PC-9 (cell line): ENCODE measurements at regions of chr20 and their contacts with region 1.

Region 1: GRCh38 chr20:33401184-33401920 is at the start of gene CDK5RAP1:
- DNase-seq: peak; percentile 82
- H3K4me3 ChIP-seq: peak within 1 kb of the TSS; percentile 98
- H3K27ac ChIP-seq: no peak within 1 kb of the TSS
- H3K4me1 ChIP-seq: peaks cover 13% of the 10 kb centered on the region
- H3K27me3 ChIP-seq: no peaks in the 10 kb centered on the region
- CTCF ChIP-seq: no peak
- total RNA-seq, gene CDK5RAP1: 39.7 and 45.3 TPM in 2 replicates

Region 2: DNA sequence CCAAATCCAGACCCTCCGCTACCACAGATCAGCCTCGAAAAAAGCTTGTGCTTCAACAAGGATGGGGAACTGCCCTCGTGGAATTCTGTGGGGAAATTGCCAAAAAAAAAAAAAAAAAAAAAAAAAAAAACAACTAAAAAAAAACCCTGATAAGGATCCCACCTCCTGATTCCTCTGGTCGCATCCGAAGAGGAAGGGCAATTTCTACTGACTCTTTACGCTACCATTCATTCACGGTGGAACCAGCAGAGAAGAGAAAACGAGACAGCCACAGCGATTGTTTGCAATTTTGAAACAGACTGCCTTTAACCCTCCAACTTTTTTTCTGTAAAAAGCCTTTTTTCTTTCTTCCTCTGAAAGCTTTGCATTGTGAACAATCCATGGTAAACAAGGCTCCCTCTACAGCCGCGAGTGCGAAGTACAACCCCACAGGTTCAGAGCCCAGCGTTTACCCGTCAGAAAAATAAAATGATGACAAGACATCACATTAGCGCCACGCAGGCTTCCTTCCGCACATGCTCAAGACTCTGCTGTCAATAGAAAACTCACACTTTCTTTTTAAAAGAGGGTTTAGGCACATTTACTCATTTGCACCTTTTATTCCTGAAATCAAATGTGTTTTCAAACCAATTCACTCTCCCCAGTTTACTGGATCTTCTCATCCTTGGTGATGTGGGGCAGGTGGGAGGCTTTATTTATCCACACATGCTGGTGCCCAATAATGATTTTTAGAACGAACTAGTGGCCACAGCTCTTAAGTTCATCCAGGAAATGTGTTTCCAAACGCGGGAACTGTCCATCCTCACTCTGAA is 916.2 kb before region 1 on chr20:
- CTCF ChIA-PET with region 1: no interaction called
- POLR2A ChIA-PET with region 1: interaction called, 28 read pairs
- intact Hi-C with region 1: no loop called
- DNase-seq: peak; percentile 59 to 72
- H3K4me3 ChIP-seq: peak overlapping the region; percentile 82
- H3K27ac ChIP-seq: peak overlapping the region; percentile 41; the same call in 1 of the 2 replicates
- H3K4me1 ChIP-seq: peaks cover 13% of the 10 kb centered on the region
- H3K27me3 ChIP-seq: no peaks in the 10 kb centered on the region
- CTCF ChIP-seq: peak; percentile 83

Region 3: GRCh38 chr20:33443512-33444239 is 42.3 kb after region 1 on chr20 and contains the start of gene SNTA1:
- CTCF ChIA-PET with region 1: interaction called, 5 read pairs
- POLR2A ChIA-PET with region 1: interaction called, 9 read pairs
- intact Hi-C with region 1: loop called (anchors 1 kb)
- DNase-seq: peak; percentile 71 to 94
- H3K4me3 ChIP-seq: peak within 1 kb of the TSS; percentile 71
- H3K27ac ChIP-seq: no peak within 1 kb of the TSS
- H3K4me1 ChIP-seq: peaks cover 4% of the 10 kb centered on the region; the same call in 1 of the 2 replicates
- H3K27me3 ChIP-seq: no peaks in the 10 kb centered on the region
- CTCF ChIP-seq: no peak
- total RNA-seq, gene SNTA1: 7.6 and 10.1 TPM in 2 replicates

Region 4: GRCh38 chr20:33551778-33552177 is 150.4 kb after region 1 on chr20:
- CTCF ChIA-PET with region 1: no interaction called
- POLR2A ChIA-PET with region 1: no interaction called
- intact Hi-C with region 1: no loop called
- DNase-seq: no peak
- H3K4me3 ChIP-seq: no peak overlapping the region
- H3K27ac ChIP-seq: no peak overlapping the region
- H3K4me1 ChIP-seq: peaks cover 13% of the 10 kb centered on the region
- H3K27me3 ChIP-seq: no peaks in the 10 kb centered on the region
- CTCF ChIP-seq: no peak

Region 5: DNA sequence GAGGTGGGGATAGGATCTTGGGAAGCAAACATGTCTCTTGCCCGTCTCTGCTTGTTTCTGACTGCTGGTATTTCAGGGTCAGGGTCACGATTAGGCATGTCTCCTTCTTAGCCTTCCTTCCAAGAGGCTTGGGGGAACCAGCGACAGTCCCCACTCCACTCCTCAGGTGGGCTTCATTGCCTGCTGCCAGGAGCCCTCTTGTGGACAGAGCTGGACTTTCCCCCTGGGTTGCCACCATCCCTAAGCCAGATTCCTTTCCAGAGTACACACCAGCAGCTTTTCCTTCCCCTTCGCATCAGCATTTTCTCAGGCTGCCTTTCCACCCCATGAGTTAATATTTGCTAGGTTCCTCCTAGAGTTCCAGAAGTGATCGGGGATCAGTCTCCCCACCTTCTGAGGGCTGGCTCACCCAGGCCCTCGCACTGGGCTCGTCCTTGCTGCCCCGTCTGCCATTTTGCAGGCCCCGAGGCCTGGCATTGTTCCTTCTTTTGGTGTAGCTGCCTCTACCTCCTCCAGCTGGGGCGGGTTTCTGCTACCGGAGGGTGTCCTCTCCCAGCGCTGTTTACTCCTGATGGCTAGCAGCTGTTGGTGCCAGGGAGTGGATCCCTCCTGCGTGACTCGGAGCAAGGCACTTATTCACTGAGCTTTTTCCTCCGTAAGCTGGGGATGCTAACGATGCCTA is 252.0 kb after region 1 on chr20:
- CTCF ChIA-PET with region 1: no interaction called
- POLR2A ChIA-PET with region 1: no interaction called
- intact Hi-C with region 1: loop called (anchors 5 kb)
- DNase-seq: peak in 1 of 2 experiments; percentile 60
- H3K4me3 ChIP-seq: no peak overlapping the region
- H3K27ac ChIP-seq: no peak overlapping the region
- H3K4me1 ChIP-seq: peaks cover 48% of the 10 kb centered on the region
- H3K27me3 ChIP-seq: no peaks in the 10 kb centered on the region
- CTCF ChIP-seq: peak; percentile 77

Region 6: GRCh38 chr20:34047917-34048316 is 646.6 kb after region 1 on chr20:
- CTCF ChIA-PET with region 1: interaction called, 21 read pairs
- POLR2A ChIA-PET with region 1: no interaction called
- intact Hi-C with region 1: no loop called
- DNase-seq: no peak
- H3K4me3 ChIP-seq: no peak overlapping the region
- H3K27ac ChIP-seq: no peak overlapping the region
- H3K4me1 ChIP-seq: no peaks in the 10 kb centered on the region
- H3K27me3 ChIP-seq: no peaks in the 10 kb centered on the region
- CTCF ChIP-seq: no peak

Region 7: DNA sequence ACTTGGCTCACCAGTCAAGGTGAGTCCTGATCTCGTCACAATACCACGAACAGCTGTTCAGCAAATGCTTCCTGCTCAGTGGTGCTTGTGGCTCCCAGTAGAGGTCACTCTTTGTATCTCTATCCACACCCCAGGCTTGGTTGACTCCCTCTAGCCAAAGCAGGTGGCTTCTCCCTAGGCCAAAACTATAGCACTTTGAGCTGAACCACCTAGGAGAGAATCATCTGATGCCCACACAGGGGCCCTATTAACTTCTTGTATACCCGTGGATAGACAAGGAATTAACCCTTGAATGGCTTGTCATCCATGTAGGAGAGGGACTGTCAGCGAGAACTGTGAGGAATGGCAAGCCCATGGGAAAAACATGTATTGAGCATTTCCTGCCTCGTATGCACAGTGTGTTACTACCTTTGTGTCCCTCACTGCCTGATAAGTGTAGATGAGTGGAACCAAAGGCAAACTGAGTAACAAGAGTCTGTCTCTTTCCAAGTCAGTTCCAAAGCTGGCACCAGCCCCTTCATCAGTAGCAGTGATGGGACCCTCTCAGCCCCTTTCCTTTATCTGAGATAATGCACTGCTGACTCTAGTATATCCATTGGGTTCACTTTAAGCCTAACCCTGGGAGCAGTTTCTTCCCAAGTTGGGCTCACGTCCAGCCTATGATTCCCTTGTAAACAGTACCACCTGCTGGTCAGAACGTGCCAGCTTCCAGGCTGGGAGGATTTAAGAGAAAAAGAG is 668.2 kb after region 1 on chr20:
- CTCF ChIA-PET with region 1: no interaction called
- POLR2A ChIA-PET with region 1: no interaction called
- intact Hi-C with region 1: loop called (anchors 1 kb)
- DNase-seq: peak; percentile 70 to 75
- H3K4me3 ChIP-seq: no peak overlapping the region
- H3K27ac ChIP-seq: 0 out of 2 replicates have a peak overlapping the region, but pooled peaks have one; percentile 33
- H3K4me1 ChIP-seq: peaks cover 13% of the 10 kb centered on the region; the same call in 1 of the 2 replicates
- H3K27me3 ChIP-seq: no peaks in the 10 kb centered on the region
- CTCF ChIP-seq: peak; percentile 89

Region 8: DNA sequence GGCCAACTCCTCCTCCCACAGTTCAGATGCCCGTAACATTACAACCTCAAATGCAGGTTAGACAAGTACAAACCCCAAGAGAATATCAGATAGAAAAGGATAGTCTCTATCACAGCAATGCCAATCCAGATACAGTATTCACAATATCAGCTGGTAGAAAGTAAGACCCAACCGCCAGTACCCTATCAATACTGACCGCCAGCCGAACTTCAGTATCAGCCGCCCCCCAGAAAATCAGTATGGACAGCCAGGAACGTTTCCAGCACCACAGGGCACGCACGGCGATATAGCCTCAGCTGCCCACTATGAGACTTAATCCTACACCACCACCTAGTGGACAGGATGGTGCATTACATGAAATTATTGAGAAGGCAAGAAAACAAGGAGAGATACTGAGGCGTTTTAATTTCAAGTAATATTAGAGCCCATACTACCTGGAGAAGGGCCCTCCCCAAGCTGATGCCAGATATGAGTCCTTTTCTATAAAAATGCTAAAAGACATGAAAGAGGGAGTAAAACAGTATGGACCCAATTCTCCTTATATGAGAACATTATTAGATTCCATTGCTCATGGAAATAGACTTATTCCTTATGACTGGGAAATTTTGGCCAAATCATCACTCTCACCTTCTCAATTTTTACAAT is 728.3 kb after region 1 on chr20:
- CTCF ChIA-PET with region 1: interaction called, 10 read pairs
- POLR2A ChIA-PET with region 1: no interaction called
- intact Hi-C with region 1: loop called (anchors 5 kb)
- DNase-seq: peak; percentile 55 to 60
- H3K4me3 ChIP-seq: no peak overlapping the region
- H3K27ac ChIP-seq: no peak overlapping the region
- H3K4me1 ChIP-seq: peaks cover 4% of the 10 kb centered on the region
- H3K27me3 ChIP-seq: no peaks in the 10 kb centered on the region
- CTCF ChIP-seq: peak; percentile 91